ENCODE measurements at regions of chr3 and their contacts with region 1.

Region 1: GRCh38 chr3:167882067-167882667 is 146.6 kb downstream of the SERPINI1 start:
- DNase-seq: no peak
- ATAC-seq: peak; percentile 55
- H3K4me3 Mint-ChIP-seq: no peak overlapping the region
- H3K27ac Mint-ChIP-seq: no peak overlapping the region
- H3K4me1 Mint-ChIP-seq: peaks cover 4% of the 10 kb centered on the region
- H3K27me3 Mint-ChIP-seq: peaks cover 14% of the 10 kb centered on the region
- CTCF ChIP-seq: peak; percentile 78

Region 2: DNA sequence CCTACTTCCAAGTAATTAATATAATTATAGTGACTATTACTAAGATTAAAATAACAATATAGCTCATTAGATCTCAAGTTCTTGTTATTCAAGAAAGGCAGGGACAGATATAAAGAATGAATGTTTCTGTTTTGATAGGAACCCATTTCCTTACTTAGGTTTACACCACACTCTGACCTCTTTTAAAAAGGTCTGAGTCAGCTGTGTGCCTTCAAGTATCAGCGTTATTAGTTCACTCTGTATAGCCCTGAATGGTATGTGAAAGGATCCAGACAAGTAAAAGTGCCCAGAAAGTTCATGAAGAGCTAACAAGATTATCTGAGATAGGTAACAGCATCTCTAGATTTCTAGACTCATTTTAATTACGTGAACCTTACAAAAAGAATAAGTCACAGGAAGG is 176.3 kb before region 1 on chr3:
- CTCF ChIA-PET with region 1: no interaction called
- POLR2A ChIA-PET with region 1: no interaction called
- intact Hi-C with region 1: no loop called
- DNase-seq: no peak
- ATAC-seq: no peak
- H3K4me3 Mint-ChIP-seq: no peak overlapping the region
- H3K27ac Mint-ChIP-seq: no peak overlapping the region
- H3K4me1 Mint-ChIP-seq: peaks cover 21% of the 10 kb centered on the region
- H3K27me3 Mint-ChIP-seq: no peaks in the 10 kb centered on the region
- CTCF ChIP-seq: no peak

Region 3: DNA sequence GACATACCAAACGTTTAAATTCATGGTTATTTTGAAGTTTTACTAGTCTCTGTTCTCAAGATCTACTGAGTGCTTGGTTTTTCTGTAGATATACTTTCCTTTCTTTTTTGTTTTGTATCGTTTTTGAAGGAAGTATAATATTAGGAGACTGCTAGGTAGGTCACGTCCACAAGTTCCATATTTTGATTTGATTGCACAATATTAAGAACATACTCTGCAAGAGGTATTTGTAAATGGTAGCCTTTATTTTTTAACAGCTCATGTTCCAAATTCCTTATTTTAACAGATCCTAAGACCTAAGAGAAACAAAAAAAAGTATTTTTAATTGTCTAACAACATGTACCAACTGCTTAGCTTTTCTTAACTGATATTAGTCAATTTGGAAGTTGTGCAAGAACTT is 10.0 kb after region 1 on chr3:
- CTCF ChIA-PET with region 1: interaction called, 16 read pairs
- POLR2A ChIA-PET with region 1: no interaction called
- intact Hi-C with region 1: no loop called
- DNase-seq: no peak
- ATAC-seq: no peak
- H3K4me3 Mint-ChIP-seq: no peak overlapping the region
- H3K27ac Mint-ChIP-seq: no peak overlapping the region
- H3K4me1 Mint-ChIP-seq: no peaks in the 10 kb centered on the region
- H3K27me3 Mint-ChIP-seq: no peaks in the 10 kb centered on the region
- CTCF ChIP-seq: no peak

Measured in activated CD8-positive, alpha-beta T cell treated with anti-CD3 and anti-CD28 coated beads for 36 hours (primary cell).